B cell (primary cell): ENCODE measurements at regions of chr11 and their contacts with region 1.

Region 1: GRCh38 chr11:124953753-124954589 is at the start of gene CCDC15:
- DNase-seq: peak; percentile 95
- ATAC-seq: peak; percentile 99
- H3K4me3 ChIP-seq: peak within 1 kb of the TSS; percentile 62 to 85 (median 81)
- H3K4me3 Mint-ChIP-seq: no peak within 1 kb of the TSS
- H3K27ac ChIP-seq: peak within 1 kb of the TSS; percentile 45 to 78
- H3K27ac Mint-ChIP-seq: no peak within 1 kb of the TSS
- H3K4me1 ChIP-seq: peaks cover 11 to 15% of the 10 kb centered on the region in 2 donors
- H3K4me1 Mint-ChIP-seq: no peaks in the 10 kb centered on the region
- H3K27me3 ChIP-seq: peaks cover 0 to 2% (median 0%) of the 10 kb centered on the region in 4 experiments
- H3K27me3 Mint-ChIP-seq: no peaks in the 10 kb centered on the region
- CTCF ChIP-seq: no peak
- total RNA-seq, gene CCDC15: 1.8 TPM in 2 replicates

Region 2: GRCh38 chr11:124746621-124747243 is 207.2 kb before region 1 on chr11:
- CTCF ChIA-PET with region 1: no interaction called
- POLR2A ChIA-PET with region 1: no interaction called
- intact Hi-C with region 1: loop called (anchors 5 kb)
- DNase-seq: peak; percentile 90
- ATAC-seq: peak; percentile 90
- H3K4me3 ChIP-seq: peak overlapping the region; percentile 62 to 97 (median 83)
- H3K4me3 Mint-ChIP-seq: peak overlapping the region; percentile 99
- H3K27ac ChIP-seq: peak overlapping the region; percentile 43 to 59
- H3K27ac Mint-ChIP-seq: peak overlapping the region; percentile 97
- H3K4me1 ChIP-seq: peaks cover 24 to 42% of the 10 kb centered on the region in 2 donors
- H3K4me1 Mint-ChIP-seq: peaks cover 35% of the 10 kb centered on the region
- H3K27me3 ChIP-seq: peaks cover 0 to 3% (median 0%) of the 10 kb centered on the region in 4 experiments
- H3K27me3 Mint-ChIP-seq: no peaks in the 10 kb centered on the region
- CTCF ChIP-seq: peak; percentile 67

Region 3: GRCh38 chr11:125062931-125063428 is 109.0 kb after region 1 on chr11 and contains the start of gene SLC37A2:
- CTCF ChIA-PET with region 1: interaction called, 3 read pairs
- POLR2A ChIA-PET with region 1: no interaction called
- intact Hi-C with region 1: loop called (anchors 1 kb)
- DNase-seq: peak; percentile 89
- ATAC-seq: peak; percentile 93
- H3K4me3 ChIP-seq: peak within 1 kb of the TSS in 4 of 5 experiments; percentile 53 to 81 (median 73)
- H3K4me3 Mint-ChIP-seq: peak within 1 kb of the TSS; percentile 94
- H3K27ac ChIP-seq: peak within 1 kb of the TSS; percentile 38 to 81
- H3K27ac Mint-ChIP-seq: peak within 1 kb of the TSS; percentile 92
- H3K4me1 ChIP-seq: peaks cover 6 to 18% of the 10 kb centered on the region in 2 donors
- H3K4me1 Mint-ChIP-seq: peaks cover 16% of the 10 kb centered on the region
- H3K27me3 ChIP-seq: peaks cover 0 to 17% (median 4%) of the 10 kb centered on the region in 4 experiments
- H3K27me3 Mint-ChIP-seq: no peaks in the 10 kb centered on the region
- CTCF ChIP-seq: no peak
- total RNA-seq, gene SLC37A2: 27.0 and 27.1 TPM in 2 replicates

Region 4: GRCh38 chr11:125141686-125142535 is 187.9 kb after region 1 on chr11:
- CTCF ChIA-PET with region 1: interaction called, 82 read pairs
- POLR2A ChIA-PET with region 1: no interaction called
- intact Hi-C with region 1: no loop called
- DNase-seq: peak; percentile 73
- ATAC-seq: peak; percentile 99
- H3K4me3 ChIP-seq: no peak overlapping the region
- H3K4me3 Mint-ChIP-seq: no peak overlapping the region
- H3K27ac ChIP-seq: no peak overlapping the region
- H3K27ac Mint-ChIP-seq: no peak overlapping the region
- H3K4me1 ChIP-seq: peaks cover 3 to 6% of the 10 kb centered on the region in 2 donors
- H3K4me1 Mint-ChIP-seq: peaks cover 4% of the 10 kb centered on the region
- H3K27me3 ChIP-seq: peaks cover 0 to 15% (median 9%) of the 10 kb centered on the region in 4 experiments
- H3K27me3 Mint-ChIP-seq: peaks cover 54% of the 10 kb centered on the region
- CTCF ChIP-seq: peak; percentile 100

Region 5: GRCh38 chr11:125517116-125517804 is 563.3 kb after region 1 on chr11:
- CTCF ChIA-PET with region 1: no interaction called
- POLR2A ChIA-PET with region 1: no interaction called
- intact Hi-C with region 1: no loop called
- DNase-seq: no peak
- ATAC-seq: no peak
- H3K4me3 ChIP-seq: no peak overlapping the region
- H3K4me3 Mint-ChIP-seq: no peak overlapping the region
- H3K27ac ChIP-seq: no peak overlapping the region
- H3K27ac Mint-ChIP-seq: no peak overlapping the region
- H3K4me1 ChIP-seq: peaks cover 24 to 26% of the 10 kb centered on the region in 2 donors
- H3K4me1 Mint-ChIP-seq: peaks cover 34% of the 10 kb centered on the region
- H3K27me3 ChIP-seq: peaks cover 0 to 3% (median 0%) of the 10 kb centered on the region in 4 experiments
- H3K27me3 Mint-ChIP-seq: no peaks in the 10 kb centered on the region
- CTCF ChIP-seq: no peak

Region 6: GRCh38 chr11:125592305-125593112 is 638.5 kb after region 1 on chr11 and contains the start of gene STT3A:
- CTCF ChIA-PET with region 1: no interaction called
- POLR2A ChIA-PET with region 1: interaction called, 3 read pairs
- intact Hi-C with region 1: loop called (anchors 5 kb)
- DNase-seq: peak; percentile 99
- ATAC-seq: peak; percentile 92
- H3K4me3 ChIP-seq: peak within 1 kb of the TSS; percentile 72 to 97 (median 84)
- H3K4me3 Mint-ChIP-seq: peak within 1 kb of the TSS; percentile 94
- H3K27ac ChIP-seq: peak within 1 kb of the TSS; percentile 94 to 95
- H3K27ac Mint-ChIP-seq: peak within 1 kb of the TSS; percentile 97
- H3K4me1 ChIP-seq: peaks cover 27 to 28% of the 10 kb centered on the region in 2 donors
- H3K4me1 Mint-ChIP-seq: peaks cover 41% of the 10 kb centered on the region
- H3K27me3 ChIP-seq: no peaks in the 10 kb centered on the region
- H3K27me3 Mint-ChIP-seq: no peaks in the 10 kb centered on the region
- CTCF ChIP-seq: no peak
- total RNA-seq, gene STT3A: 76.1 and 78.4 TPM in 2 replicates